HEK293T (cell line): ENCODE measurements at regions of chr1 and their contacts with region 1.

Region 1: DNA sequence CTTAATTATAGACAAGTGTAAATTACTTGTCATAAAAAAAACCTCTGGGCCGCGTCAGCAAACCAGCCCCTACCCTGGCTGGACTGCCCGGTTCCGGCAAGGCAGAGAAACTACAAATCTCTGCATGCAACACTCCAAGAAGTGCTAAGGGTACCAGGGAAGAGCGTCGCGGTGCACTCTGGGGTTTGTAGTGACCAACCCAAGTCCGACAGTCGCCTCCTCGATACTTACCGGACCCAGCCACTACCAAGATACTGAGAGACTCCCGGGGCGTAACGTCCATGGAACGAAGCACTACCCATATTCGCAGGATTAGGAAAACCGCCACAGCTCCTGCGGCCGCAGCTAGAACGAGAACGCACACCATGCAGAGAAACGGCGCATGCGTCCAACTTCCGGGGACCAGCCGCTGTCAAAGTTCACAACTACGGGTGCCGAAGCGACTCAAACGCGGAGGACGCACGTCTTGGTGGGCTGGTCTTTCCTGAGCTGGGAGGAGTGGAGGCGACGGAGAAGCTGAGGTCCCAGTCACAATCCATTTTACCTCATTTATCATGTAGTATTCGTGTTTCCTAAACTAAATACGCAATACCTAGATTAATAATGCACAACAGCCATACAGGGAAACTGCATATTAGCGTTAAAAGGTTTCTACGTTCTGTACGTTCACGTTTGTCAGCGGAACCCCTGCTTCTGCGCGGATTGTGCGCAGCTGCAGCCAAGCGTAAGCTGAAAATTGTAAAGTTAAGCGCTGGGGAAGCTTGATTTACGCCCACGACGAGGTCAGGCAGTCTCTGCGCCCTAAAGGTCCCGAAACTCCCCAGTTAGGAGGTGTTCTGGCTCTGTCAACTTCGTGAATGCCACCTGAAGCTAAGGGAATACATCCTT is at the start of gene ALG14:
- DNase-seq: peak; percentile 95

Region 2: GRCh38 chr1:95013950-95014574 is 58.7 kb before region 1 on chr1:
- CTCF ChIA-PET with region 1: no interaction called
- POLR2A ChIA-PET with region 1: no interaction called
- DNase-seq: no peak

Region 3: GRCh38 chr1:95084317-95085176 is 11.8 kb after region 1 on chr1:
- CTCF ChIA-PET with region 1: interaction called, 17 read pairs
- POLR2A ChIA-PET with region 1: interaction called, 23 read pairs
- DNase-seq: peak; percentile 67

Region 4: GRCh38 chr1:95116580-95117206 is 43.9 kb after region 1 on chr1:
- CTCF ChIA-PET with region 1: interaction called, 3 read pairs
- POLR2A ChIA-PET with region 1: interaction called, 21 read pairs
- DNase-seq: peak; percentile 85

Region 5: GRCh38 chr1:95139039-95139438 is 66.3 kb after region 1 on chr1:
- CTCF ChIA-PET with region 1: no interaction called
- POLR2A ChIA-PET with region 1: no interaction called
- DNase-seq: no peak

Region 6: DNA sequence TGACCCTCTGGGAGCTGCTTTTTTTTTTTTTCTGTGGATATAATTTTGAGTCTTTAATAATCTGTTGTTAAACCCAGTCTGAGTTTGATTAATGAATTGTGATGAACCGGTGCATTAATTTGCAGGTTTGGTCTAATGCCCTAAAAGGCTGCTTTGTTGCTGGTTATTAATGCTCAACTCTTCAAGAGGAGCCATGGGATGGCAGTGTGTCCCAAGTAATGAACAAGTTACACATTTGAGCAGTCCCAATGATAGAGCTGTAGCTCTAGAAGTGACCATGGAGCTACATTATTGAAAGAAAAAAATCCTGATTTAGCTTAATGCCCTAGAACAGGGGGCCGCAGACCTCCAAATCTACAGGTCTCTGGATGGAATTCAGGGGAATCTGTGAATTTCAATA is 214.3 kb after region 1 on chr1:
- CTCF ChIA-PET with region 1: no interaction called
- POLR2A ChIA-PET with region 1: no interaction called
- DNase-seq: no peak